ENCODE measurements at regions of chr3 and their contacts with region 1.

Region 1: DNA sequence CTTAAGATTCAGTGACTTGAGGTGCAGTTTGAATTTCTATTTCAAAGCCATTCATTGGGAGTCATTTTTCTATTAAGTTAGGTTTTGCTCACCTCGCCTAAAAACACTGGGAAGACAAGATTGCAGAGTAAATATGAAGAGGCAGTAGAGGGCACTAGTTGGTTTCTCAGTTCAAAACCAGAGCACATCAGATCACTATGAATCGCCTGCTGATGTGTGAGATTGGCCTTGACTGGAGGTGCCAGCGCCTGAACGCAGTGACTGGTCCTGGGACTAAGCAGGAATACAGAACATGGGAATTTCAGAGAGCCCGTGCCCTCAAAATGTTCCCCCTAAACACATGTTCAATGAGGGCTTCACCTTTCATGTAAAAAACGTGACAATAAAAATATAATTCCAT is 229.0 kb downstream of the ITPR1 start:
- DNase-seq: peak; percentile 58
- ATAC-seq: peak; percentile 93
- H3K4me3 Mint-ChIP-seq: no peak overlapping the region
- H3K27ac Mint-ChIP-seq: peak overlapping the region; percentile 51
- H3K4me1 Mint-ChIP-seq: peaks cover 32% of the 10 kb centered on the region
- H3K27me3 Mint-ChIP-seq: no peaks in the 10 kb centered on the region

Region 2: GRCh38 chr3:4736284-4736861 is 14.3 kb after region 1 on chr3:
- CTCF ChIA-PET with region 1: interaction called, 4 read pairs
- POLR2A ChIA-PET with region 1: no interaction called
- intact Hi-C with region 1: loop called in 1 of 2 experiments (anchors 2 kb)
- DNase-seq: no peak
- ATAC-seq: no peak
- H3K4me3 Mint-ChIP-seq: no peak overlapping the region
- H3K27ac Mint-ChIP-seq: peak overlapping the region; percentile 63
- H3K4me1 Mint-ChIP-seq: peaks cover 55% of the 10 kb centered on the region
- H3K27me3 Mint-ChIP-seq: no peaks in the 10 kb centered on the region

Region 3: GRCh38 chr3:4888913-4889846 is 167.1 kb after region 1 on chr3:
- CTCF ChIA-PET with region 1: interaction called, 3 read pairs
- POLR2A ChIA-PET with region 1: no interaction called
- intact Hi-C with region 1: loop called in 1 of 2 experiments (anchors 2 kb)
- DNase-seq: peak; percentile 50
- ATAC-seq: peak; percentile 90
- H3K4me3 Mint-ChIP-seq: peak overlapping the region; percentile 5
- H3K27ac Mint-ChIP-seq: peak overlapping the region; percentile 83
- H3K4me1 Mint-ChIP-seq: peaks cover 37% of the 10 kb centered on the region
- H3K27me3 Mint-ChIP-seq: peaks cover 2% of the 10 kb centered on the region

Region 4: DNA sequence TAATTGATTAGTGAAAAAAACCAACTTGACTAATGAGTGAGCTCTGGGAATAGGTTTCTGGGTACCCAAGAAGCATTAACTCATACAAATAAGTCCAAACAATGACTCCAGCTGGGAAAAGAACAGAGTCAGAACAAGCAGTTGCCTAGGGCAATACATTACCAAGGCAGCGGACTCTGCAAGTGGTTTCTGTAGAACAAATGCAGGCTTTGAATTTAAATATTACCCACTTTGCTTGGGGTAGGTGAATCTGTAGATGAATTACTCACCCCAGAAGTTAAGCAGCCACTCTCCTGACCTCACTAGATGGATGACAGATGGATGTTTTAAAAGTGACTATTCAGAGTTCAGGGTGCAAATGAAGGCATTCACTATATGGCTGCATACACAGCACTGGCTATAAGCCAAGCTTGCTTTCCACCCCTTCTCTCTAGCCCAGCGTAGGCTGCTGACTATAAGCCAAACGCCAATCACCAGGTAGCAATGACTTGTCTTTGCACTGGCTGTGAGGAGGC is 184.1 kb after region 1 on chr3:
- CTCF ChIA-PET with region 1: interaction called, 3 read pairs
- POLR2A ChIA-PET with region 1: no interaction called
- intact Hi-C with region 1: loop called in 1 of 2 experiments (anchors 5 kb)
- DNase-seq: peak; percentile 54
- ATAC-seq: peak; percentile 75
- H3K4me3 Mint-ChIP-seq: no peak overlapping the region
- H3K27ac Mint-ChIP-seq: peak overlapping the region; percentile 53
- H3K4me1 Mint-ChIP-seq: peaks cover 75% of the 10 kb centered on the region
- H3K27me3 Mint-ChIP-seq: no peaks in the 10 kb centered on the region

Region 5: GRCh38 chr3:4986782-4987537 is 264.9 kb after region 1 on chr3:
- CTCF ChIA-PET with region 1: interaction called, 11 read pairs
- POLR2A ChIA-PET with region 1: no interaction called
- intact Hi-C with region 1: no loop called
- DNase-seq: peak; percentile 87
- ATAC-seq: peak; percentile 55
- H3K4me3 Mint-ChIP-seq: peak overlapping the region; percentile 72
- H3K27ac Mint-ChIP-seq: peak overlapping the region; percentile 76
- H3K4me1 Mint-ChIP-seq: peaks cover 56% of the 10 kb centered on the region
- H3K27me3 Mint-ChIP-seq: no peaks in the 10 kb centered on the region

Region 6: GRCh38 chr3:5057857-5058324 is 335.8 kb after region 1 on chr3:
- CTCF ChIA-PET with region 1: interaction called, 190 read pairs
- POLR2A ChIA-PET with region 1: no interaction called
- intact Hi-C with region 1: loop called (anchors 1 kb)
- DNase-seq: peak; percentile 87
- ATAC-seq: peak; percentile 96
- H3K4me3 Mint-ChIP-seq: no peak overlapping the region
- H3K27ac Mint-ChIP-seq: peak overlapping the region; percentile 11
- H3K4me1 Mint-ChIP-seq: peaks cover 17% of the 10 kb centered on the region
- H3K27me3 Mint-ChIP-seq: peaks cover 8% of the 10 kb centered on the region

Measured in activated CD4-positive, alpha-beta T cell treated with anti-CD3 and anti-CD28 coated beads for 36 hours (primary cell).